Calu3 (cell line): ENCODE measurements at regions of chr5 and their contacts with region 1.

Region 1: DNA sequence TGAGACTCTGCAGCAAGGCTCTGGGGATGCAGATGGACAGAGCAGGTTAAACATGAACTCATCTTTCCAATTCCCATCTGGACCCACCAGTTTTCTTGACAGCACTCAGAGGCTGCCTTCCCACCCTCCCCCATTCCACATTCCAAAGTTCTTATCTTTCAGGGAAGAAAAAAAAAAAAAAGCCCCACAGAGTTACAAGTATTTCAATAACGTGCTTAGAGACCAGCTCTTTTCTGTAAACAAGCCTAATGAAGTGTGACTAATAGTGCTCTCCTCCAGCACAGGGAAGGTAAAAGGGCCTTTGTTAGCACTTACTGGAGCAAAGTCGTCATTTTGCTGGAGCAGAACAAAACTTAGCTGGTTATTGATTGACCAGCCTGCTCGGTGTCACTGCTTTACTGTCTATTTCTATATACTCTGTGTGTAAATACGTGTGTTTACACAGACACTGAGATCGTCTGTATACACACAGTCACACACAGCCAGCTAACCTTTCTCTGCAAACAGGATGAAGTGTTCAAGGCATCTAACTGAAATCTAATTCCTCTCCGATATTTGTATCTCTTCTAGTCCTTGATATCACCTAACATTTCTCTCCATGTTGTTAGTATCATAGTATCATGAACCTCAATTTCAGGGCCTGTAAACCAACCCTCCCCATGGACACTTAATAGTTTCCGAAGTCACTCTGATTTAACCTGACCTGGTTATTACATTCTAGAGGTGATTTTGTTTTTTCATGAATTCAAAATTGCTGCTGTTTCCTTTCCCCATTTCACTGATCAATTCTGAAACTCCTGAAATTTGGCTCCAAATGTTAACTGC is 84.9 kb downstream of the ZNF608 start:
- DNase-seq: peak; percentile 78
- H3K4me3 Mint-ChIP-seq: peak overlapping the region; percentile 69
- H3K27ac Mint-ChIP-seq: peak overlapping the region; percentile 98
- H3K4me1 Mint-ChIP-seq: peaks cover 58% of the 10 kb centered on the region
- H3K27me3 Mint-ChIP-seq: no peaks in the 10 kb centered on the region
- CTCF ChIP-seq: no peak

Region 2: DNA sequence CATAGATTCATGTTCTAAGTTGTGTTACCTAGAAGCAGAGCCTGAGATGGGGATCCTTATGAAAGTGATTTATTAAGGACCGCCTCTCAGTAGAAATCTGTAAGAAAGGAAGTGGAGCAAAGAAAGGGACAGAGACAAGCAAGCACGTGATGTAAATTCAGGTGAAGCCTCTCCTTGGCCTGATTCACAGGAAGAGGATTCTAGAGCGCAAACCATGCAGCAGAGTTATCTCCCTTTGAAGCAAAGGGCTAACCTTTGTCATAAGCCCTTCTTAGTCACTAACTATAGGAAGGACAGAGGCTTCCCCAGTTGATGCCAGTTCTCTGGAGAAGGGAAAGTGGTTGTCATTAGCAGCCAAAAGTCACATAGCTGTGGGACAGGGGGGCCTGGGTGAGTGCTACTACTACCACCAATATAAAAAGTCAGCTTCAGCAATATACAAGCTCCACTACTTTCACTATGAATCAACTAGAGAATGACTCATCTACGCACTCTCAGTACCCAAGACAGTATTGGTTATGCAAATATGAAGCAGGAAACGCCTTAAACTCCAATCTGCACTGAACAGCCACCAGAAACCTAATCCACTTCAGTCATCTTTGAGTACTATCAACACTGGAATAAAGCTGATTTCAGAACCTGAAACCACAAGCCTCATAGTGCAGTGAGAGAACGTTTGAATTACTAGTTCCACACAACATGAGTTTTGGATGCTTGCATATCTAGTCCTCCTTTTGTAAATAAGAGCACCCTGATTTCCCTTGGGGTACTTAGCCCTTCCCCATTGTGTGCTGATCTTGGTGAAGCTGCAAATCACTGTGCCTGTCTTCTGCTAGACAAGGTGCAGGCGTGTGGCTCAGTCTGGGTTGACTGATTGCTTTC is 77.8 kb before region 1 on chr5:
- CTCF ChIA-PET with region 1: interaction called, 3 read pairs
- intact Hi-C with region 1: loop called (anchors 5 kb)
- DNase-seq: peak; percentile 51
- H3K4me3 Mint-ChIP-seq: no peak overlapping the region
- H3K27ac Mint-ChIP-seq: peak overlapping the region; percentile 24
- H3K4me1 Mint-ChIP-seq: peaks cover 45% of the 10 kb centered on the region
- H3K27me3 Mint-ChIP-seq: no peaks in the 10 kb centered on the region
- CTCF ChIP-seq: no peak

Region 3: DNA sequence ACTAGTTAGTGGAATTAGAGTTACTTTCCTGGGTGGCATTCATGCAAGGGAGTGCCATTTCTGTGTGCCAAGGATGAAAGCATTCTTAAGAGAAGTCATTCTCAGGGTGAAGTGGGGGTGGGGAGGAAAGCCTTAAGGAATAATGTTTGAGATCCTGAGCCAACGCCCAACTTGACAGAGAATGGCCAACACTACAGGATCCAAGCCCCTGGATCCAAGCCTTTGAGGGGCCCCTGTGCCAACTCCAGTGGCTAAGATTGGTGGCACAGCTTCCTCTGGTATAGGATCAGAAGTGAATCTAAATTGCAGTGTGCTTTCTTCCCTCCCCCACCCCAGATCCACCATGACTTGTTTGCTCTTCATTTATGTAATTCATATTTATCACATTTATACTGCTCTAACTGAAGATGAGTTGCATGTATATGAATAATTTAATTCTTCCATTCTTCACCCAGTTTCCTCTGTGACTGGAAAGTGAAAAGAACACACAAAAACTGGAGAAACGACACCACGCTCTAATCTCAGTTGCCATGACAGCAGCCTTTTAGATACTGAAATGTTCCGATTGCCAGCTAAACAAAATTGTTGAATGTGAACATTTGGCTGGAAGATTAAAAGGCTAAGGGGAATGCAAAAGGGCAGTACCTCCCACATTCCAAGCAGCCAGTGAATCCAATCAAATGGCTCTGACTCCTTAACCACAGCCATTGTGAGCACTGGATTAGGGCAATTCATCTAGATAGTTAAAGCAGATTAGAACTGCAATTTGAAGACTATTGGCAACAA is 80.4 kb after region 1 on chr5:
- CTCF ChIA-PET with region 1: interaction called, 5 read pairs
- intact Hi-C with region 1: loop called (anchors 1 kb)
- DNase-seq: peak; percentile 65
- H3K4me3 Mint-ChIP-seq: no peak overlapping the region
- H3K27ac Mint-ChIP-seq: no peak overlapping the region
- H3K4me1 Mint-ChIP-seq: peaks cover 27% of the 10 kb centered on the region
- H3K27me3 Mint-ChIP-seq: no peaks in the 10 kb centered on the region
- CTCF ChIP-seq: no peak

Region 4: DNA sequence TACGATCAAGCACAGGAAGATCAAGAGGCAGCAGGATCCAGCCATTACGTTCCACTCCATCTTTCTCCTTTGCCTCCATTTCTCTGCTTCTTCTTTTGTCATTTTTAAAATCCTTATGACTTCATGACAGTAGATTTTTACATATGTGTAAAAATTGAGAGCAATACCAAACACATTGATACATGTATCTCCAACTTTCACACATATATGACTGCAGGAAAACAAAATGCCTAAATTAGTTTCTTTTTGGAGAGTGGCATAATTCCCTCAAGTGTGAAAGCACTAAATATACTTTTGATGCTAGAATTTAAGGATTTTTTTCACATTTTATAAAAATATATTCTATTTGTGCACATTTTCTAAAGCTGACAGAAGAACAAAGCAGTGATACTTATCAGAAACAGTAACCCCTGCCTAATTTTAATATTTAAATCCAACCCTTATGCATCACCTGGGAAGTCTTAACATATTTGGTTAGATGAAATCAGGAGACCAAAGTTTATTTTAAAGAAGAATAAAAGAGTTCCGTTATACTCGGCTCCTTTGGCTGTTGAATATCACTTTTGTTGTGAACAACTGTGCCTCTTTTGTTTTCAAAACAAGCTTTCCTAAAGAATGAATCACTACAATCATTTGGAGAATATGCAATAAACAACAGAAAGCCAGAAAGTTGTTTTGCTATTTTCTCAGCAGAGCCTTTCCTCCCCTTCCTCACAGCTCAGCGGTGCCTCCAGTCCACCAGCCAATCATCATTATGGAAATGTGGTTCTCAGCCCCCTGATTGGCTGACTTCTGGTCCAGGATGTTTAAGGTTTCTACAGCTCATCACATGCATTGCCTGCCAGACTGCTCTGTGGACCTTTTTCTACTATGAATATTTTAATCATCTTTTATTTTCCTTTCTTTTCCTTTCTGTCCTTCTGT is 93.8 kb after region 1 on chr5:
- CTCF ChIA-PET with region 1: no interaction called
- intact Hi-C with region 1: no loop called
- DNase-seq: no peak
- H3K4me3 Mint-ChIP-seq: no peak overlapping the region
- H3K27ac Mint-ChIP-seq: no peak overlapping the region
- H3K4me1 Mint-ChIP-seq: peaks cover 17% of the 10 kb centered on the region
- H3K27me3 Mint-ChIP-seq: no peaks in the 10 kb centered on the region
- CTCF ChIP-seq: no peak

Region 5: GRCh38 chr5:124888050-124888506 is 226.5 kb after region 1 on chr5:
- CTCF ChIA-PET with region 1: interaction called, 4 read pairs
- intact Hi-C with region 1: loop called (anchors 5 kb)
- DNase-seq: peak; percentile 70
- H3K4me3 Mint-ChIP-seq: peak overlapping the region; percentile 55
- H3K27ac Mint-ChIP-seq: peak overlapping the region; percentile 88
- H3K4me1 Mint-ChIP-seq: peaks cover 22% of the 10 kb centered on the region
- H3K27me3 Mint-ChIP-seq: no peaks in the 10 kb centered on the region
- CTCF ChIP-seq: no peak

Region 6: DNA sequence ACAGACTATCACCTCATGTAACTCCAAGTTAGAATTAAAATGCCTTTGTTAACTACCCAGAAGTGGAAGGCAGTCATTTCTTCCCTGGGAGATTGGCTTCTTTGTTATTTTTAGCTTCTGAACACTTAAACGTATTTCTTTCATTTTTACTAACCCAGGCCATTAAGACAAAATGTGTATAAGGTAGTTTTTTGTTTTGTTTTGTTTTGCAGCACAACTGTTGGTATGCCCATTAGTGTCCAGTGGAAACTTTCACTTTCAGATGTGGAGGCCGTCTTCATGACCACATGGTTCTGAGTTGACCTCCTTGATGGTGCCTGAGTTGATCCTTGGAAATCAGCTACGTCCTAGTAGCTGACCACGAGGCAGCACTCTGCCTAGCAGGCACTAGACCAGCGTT is 349.5 kb after region 1 on chr5:
- CTCF ChIA-PET with region 1: no interaction called
- intact Hi-C with region 1: loop called (anchors 10 kb)
- DNase-seq: no peak
- H3K4me3 Mint-ChIP-seq: no peak overlapping the region
- H3K27ac Mint-ChIP-seq: no peak overlapping the region
- H3K4me1 Mint-ChIP-seq: peaks cover 27% of the 10 kb centered on the region
- H3K27me3 Mint-ChIP-seq: no peaks in the 10 kb centered on the region
- CTCF ChIP-seq: no peak

Region 7: DNA sequence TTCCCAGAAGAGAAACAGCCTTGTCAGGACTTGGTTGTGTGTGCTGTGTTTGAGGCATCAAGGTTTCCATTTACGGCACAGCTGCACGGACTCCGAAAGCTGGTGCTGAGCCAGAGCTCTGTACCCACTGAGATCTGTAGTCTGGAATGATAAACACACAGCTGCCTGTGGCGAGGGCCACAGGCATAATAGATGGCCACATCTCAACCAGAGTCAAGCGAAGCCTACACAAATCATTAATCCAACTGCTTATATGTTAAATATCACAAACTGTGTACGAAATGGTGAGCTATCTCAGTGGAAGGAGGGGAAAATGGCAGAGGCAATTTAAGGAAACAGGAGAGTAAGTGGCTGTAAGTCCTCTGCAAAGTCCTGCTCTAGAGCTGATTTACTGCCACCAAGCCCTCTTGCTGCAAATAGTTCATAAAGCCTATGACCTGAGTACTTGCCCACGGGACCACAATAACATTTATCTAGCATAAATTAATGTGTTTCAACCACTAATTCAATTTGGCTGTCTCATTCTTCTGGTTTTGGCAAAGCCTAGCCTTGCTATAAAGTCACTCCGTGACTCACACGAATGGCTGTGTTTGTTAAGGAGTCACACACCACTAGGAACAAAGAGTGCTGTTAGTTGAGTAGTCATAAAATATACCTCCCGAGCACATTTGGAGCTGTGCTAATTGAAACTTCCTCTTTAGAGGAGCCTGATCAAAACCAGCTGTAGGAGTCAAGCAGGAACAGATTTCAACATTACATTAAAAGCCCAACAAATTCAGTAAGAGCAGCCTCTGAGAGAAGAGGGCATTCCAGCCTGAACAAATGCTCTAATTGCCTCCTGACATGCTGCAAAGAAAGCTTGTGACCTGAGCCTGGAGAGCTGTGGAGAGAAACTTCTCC is 823.5 kb after region 1 on chr5:
- CTCF ChIA-PET with region 1: interaction called, 4 read pairs
- intact Hi-C with region 1: loop called (anchors 10 kb)
- DNase-seq: peak; percentile 56
- H3K4me3 Mint-ChIP-seq: peak overlapping the region; percentile 71
- H3K27ac Mint-ChIP-seq: peak overlapping the region; percentile 91
- H3K4me1 Mint-ChIP-seq: peaks cover 31% of the 10 kb centered on the region
- H3K27me3 Mint-ChIP-seq: no peaks in the 10 kb centered on the region
- CTCF ChIP-seq: no peak